ENCODE measurements at regions of chr18 and their contacts with region 1.

Region 1: GRCh38 chr18:57716549-57716948 is 86.6 kb downstream of the ATP8B1 start:
- DNase-seq: no peak
- ATAC-seq: no peak
- H3K4me3 ChIP-seq: no peak overlapping the region
- H3K27ac ChIP-seq: peak overlapping the region; percentile 79
- H3K4me1 ChIP-seq: peaks cover 33% of the 10 kb centered on the region
- H3K27me3 ChIP-seq: no peaks in the 10 kb centered on the region
- CTCF ChIP-seq: no peak

Region 2: GRCh38 chr18:57561728-57562423 is 154.7 kb before region 1 on chr18:
- CTCF ChIA-PET with region 1: no interaction called
- POLR2A ChIA-PET with region 1: no interaction called
- intact Hi-C with region 1: no loop called
- DNase-seq: peak; percentile 57
- ATAC-seq: 0 out of 2 replicates have a peak, but pooled peaks have one; percentile 42
- H3K4me3 ChIP-seq: no peak overlapping the region
- H3K27ac ChIP-seq: no peak overlapping the region
- H3K4me1 ChIP-seq: no peaks in the 10 kb centered on the region
- H3K27me3 ChIP-seq: no peaks in the 10 kb centered on the region
- CTCF ChIP-seq: peak; percentile 93

Region 3: DNA sequence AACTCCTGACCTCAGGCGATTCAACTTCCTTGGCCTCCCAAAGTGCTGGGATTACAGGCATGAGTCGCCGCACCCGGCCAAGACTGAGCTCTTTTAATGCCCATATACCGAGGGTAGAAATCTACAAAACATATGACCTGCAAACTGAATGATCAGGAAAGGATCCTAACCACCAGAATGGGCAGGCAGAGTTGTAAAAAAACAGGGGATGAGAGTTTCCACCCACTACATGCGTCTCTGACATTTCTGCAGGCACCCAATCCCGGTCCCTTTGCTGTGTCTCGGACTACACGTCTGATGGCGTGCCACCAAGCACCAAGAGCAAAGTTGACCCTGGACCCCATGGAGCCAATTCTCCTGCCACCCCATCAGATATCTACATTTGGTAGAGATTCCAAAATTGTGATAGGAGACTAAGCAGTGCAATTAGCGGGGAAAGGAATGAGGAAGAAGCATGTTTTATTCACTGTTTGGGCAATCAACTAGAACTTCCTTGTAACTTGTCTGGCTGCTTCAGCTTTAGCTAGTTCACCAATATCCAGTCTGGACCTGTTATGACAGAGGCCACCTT is 12.5 kb after region 1 on chr18:
- CTCF ChIA-PET with region 1: interaction called, 11 read pairs
- POLR2A ChIA-PET with region 1: no interaction called
- intact Hi-C with region 1: no loop called
- DNase-seq: peak; percentile 29
- ATAC-seq: peak; percentile 20; the same call in 1 of the 2 replicates
- H3K4me3 ChIP-seq: no peak overlapping the region
- H3K27ac ChIP-seq: peak overlapping the region; percentile 44; the same call in 1 of the 2 replicates
- H3K4me1 ChIP-seq: peaks cover 12% of the 10 kb centered on the region; the same call in 1 of the 2 replicates
- H3K27me3 ChIP-seq: no peaks in the 10 kb centered on the region
- CTCF ChIP-seq: no peak